Gastrocnemius medialis (tissue), 4 donors: ENCODE measurements at regions of chr3 and their contacts with region 1.

Region 1: GRCh38 chr3:78988324-78988723 is 779.5 kb downstream of the ROBO1 start:
- DNase-seq: no peak
- ATAC-seq: no peak
- H3K4me3 ChIP-seq: no peak overlapping the region
- H3K27ac ChIP-seq: no peak overlapping the region
- H3K4me1 ChIP-seq: no peaks in the 10 kb centered on the region
- H3K27me3 ChIP-seq: no peaks in the 10 kb centered on the region
- CTCF ChIP-seq: no peak
- POLR2A ChIP-seq: no peak

Region 2: DNA sequence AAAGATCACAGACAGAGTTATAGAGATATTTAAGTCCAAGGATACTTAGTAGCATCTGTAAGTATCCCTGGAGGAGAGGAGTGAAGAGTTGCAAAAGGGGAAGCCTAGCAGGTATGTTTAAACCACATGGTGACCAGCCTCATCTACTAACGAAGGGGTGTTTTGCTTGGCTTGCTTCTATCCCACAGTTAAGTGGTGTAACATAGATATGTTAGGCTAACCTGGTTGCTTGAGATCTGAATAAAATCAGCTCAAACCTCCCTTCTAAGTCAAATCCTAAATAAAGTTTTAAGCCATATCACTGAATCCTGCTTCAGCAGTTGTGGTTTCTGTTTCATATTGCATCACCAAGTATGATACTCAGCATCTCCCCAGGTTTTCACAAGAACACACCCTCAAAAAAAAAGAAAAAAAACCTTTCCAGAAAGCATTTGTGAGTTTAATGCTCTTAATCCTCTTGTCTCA is 100.7 kb before region 1 on chr3:
- in situ Hi-C with region 1: loop called in 1 of 4 experiments (anchors 25 kb)
- intact Hi-C with region 1: no loop called
- DNase-seq: no peak
- ATAC-seq: no peak
- H3K4me3 ChIP-seq: no peak overlapping the region
- H3K27ac ChIP-seq: no peak overlapping the region
- H3K4me1 ChIP-seq: no peaks in the 10 kb centered on the region
- H3K27me3 ChIP-seq: no peaks in the 10 kb centered on the region
- CTCF ChIP-seq: no peak
- POLR2A ChIP-seq: no peak